PC-9 (cell line): ENCODE measurements at regions of chr12 and their contacts with region 1.

Region 1: GRCh38 chr12:48995061-48995879 is 3.9 kb downstream of the DDN start:
- DNase-seq: peak; percentile 64 to 86
- H3K4me3 ChIP-seq: peak overlapping the region; percentile 27; the same call in 1 of the 2 replicates
- H3K27ac ChIP-seq: no peak overlapping the region
- H3K4me1 ChIP-seq: peaks cover 22% of the 10 kb centered on the region
- H3K27me3 ChIP-seq: no peaks in the 10 kb centered on the region
- CTCF ChIP-seq: peak; percentile 82

Region 2: GRCh38 chr12:48157018-48157888 is 838.0 kb before region 1 on chr12 and contains the start of gene ASB8:
- CTCF ChIA-PET with region 1: interaction called, 12 read pairs
- POLR2A ChIA-PET with region 1: no interaction called
- intact Hi-C with region 1: no loop called
- DNase-seq: peak; percentile 93 to 97
- H3K4me3 ChIP-seq: peak within 1 kb of the TSS; percentile 90
- H3K27ac ChIP-seq: no peak within 1 kb of the TSS; the same call in 1 of the 2 replicates
- H3K4me1 ChIP-seq: peaks cover 7% of the 10 kb centered on the region; the same call in 1 of the 2 replicates
- H3K27me3 ChIP-seq: no peaks in the 10 kb centered on the region
- CTCF ChIP-seq: peak; percentile 52
- total RNA-seq, gene ASB8: 21.8 and 25.1 TPM in 2 replicates

Region 3: GRCh38 chr12:48681738-48682532 is 313.3 kb before region 1 on chr12 and contains the start of gene KANSL2:
- CTCF ChIA-PET with region 1: no interaction called
- POLR2A ChIA-PET with region 1: no interaction called
- intact Hi-C with region 1: loop called (anchors 10 kb)
- DNase-seq: peak; percentile 97
- H3K4me3 ChIP-seq: peak within 1 kb of the TSS; percentile 77
- H3K27ac ChIP-seq: peak within 1 kb of the TSS; percentile 50; the same call in 1 of the 2 replicates
- H3K4me1 ChIP-seq: peaks cover 30% of the 10 kb centered on the region
- H3K27me3 ChIP-seq: no peaks in the 10 kb centered on the region
- CTCF ChIP-seq: no peak
- total RNA-seq, gene KANSL2: 21.8 and 28.2 TPM in 2 replicates

Region 4: DNA sequence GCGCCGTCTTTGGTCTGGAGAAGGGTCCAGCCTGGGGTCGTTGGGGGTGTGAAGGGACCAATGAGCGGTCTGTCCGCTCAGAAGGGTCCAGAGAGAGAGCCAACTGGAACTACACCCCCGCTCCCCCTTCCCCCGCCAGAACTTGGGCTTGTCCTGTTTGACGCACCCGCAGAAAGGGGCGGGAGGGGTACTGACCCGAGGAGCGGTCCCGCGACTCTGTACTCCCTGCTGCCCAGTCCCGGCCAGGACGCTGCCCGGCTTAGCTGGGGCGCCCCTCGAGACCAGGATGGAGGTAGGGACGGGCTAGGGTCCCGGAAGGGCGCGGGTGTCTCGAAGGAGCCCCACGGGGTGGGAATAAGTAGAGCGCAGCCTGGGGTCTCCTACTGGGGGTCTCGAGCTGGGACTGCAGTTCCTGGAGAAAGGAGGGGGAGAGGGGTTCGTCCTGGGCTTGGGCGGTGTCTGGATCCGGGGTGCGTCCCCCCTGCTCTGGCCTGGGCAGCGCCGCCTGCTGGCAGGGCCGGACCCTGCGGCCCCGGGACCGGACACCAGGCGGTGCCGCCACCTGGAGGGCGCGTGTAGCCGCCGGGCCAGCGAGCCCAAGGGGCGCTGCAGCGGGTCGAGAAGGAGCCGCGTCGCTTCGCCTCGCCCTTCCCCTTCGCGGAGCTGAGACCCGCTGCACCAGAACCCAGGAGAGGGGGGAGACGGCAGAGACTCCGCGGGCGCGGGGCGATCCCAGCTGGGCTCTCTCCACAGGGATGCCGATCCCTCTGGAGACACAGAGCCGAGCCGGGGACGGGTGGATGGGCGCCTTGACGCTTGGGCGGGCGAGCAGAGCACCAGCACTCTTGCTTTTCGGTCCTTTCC is 180.8 kb before region 1 on chr12:
- CTCF ChIA-PET with region 1: no interaction called
- POLR2A ChIA-PET with region 1: no interaction called
- intact Hi-C with region 1: loop called (anchors 5 kb)
- DNase-seq: peak; percentile 46 to 88
- H3K4me3 ChIP-seq: peak overlapping the region; percentile 72
- H3K27ac ChIP-seq: 0 out of 2 replicates have a peak overlapping the region, but pooled peaks have one; percentile 2
- H3K4me1 ChIP-seq: peaks cover 19% of the 10 kb centered on the region
- H3K27me3 ChIP-seq: no peaks in the 10 kb centered on the region
- CTCF ChIP-seq: peak; percentile 89

Region 5: DNA sequence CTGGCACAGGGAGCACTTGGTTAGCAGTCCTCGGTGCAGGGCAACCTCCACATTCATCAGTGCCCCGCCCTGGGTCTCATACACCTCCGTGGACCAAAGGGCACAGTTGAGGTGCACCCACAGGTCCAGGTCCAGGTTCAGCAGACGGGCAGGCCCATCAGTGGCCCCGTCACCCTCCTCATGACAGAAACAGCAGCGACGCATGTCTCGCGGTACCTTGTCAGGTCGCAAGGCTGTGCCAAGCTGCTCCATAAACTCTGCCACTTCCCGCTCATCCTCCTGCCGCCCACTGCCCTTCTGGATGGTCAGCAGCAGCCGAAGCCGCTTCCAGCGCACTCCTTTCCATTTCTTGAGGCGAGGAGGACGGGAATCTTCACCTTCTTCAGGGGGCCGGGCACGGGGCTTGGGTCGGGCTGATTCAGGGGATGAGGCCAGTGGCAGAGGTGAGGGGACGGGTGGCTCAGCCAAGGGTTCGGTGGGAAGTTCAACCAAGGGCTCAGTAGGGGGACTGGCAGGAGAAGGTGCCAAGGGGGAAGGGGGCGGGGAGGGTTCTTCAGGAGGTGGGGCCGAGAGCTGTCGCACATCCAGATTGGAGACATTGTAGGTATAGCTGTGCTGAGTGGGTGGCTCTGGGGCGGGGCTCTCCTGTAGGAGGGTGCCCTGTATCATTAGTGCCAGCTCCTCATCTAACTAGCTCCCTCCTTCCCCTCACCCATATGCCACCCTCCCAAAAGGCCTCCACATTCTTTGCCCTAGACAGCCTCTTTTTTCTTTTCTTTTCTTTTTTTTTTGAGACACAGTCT is 31.6 kb after region 1 on chr12:
- CTCF ChIA-PET with region 1: no interaction called
- POLR2A ChIA-PET with region 1: no interaction called
- intact Hi-C with region 1: no loop called
- DNase-seq: no peak
- H3K4me3 ChIP-seq: no peak overlapping the region
- H3K27ac ChIP-seq: no peak overlapping the region
- H3K4me1 ChIP-seq: no peaks in the 10 kb centered on the region
- H3K27me3 ChIP-seq: no peaks in the 10 kb centered on the region
- CTCF ChIP-seq: no peak

Region 6: DNA sequence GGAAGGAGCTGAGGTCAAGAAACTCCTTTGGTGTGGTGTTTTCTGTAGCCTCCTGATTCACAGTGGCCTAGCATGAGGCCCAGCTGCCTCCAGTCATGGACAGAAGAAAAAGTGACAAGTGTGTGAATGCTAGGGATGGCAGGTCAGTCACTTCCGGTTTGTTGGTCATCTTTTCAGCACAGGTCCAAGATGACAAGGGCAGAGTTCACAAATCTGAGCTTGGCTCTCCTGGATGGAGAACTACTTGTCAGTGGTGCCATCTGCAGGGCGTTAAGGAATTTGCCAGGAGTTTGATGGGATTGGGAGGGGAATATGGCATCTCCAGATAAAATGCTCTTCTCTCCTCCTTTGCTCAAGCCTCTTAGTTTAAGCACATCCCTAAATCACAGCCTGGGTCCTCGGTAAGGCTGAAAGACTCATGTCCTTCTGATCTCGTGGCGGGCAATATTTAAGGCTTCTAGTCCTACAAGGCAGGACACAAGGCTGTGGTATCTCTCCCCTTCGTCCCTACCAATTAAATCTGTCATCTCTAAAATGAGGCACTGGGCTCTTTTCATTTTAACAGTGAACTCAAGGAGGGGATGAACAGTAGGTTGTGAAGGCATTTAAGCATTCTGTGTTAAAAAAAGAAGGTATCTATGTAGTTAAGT is 125.9 kb after region 1 on chr12:
- CTCF ChIA-PET with region 1: interaction called, 8 read pairs
- POLR2A ChIA-PET with region 1: no interaction called
- intact Hi-C with region 1: loop called (anchors 5 kb)
- DNase-seq: peak in 1 of 2 experiments; percentile 75
- H3K4me3 ChIP-seq: no peak overlapping the region
- H3K27ac ChIP-seq: no peak overlapping the region
- H3K4me1 ChIP-seq: no peaks in the 10 kb centered on the region
- H3K27me3 ChIP-seq: no peaks in the 10 kb centered on the region
- CTCF ChIP-seq: peak; percentile 73